Uterus (tissue), 4 donors: ENCODE measurements at regions of chr5 and their contacts with region 1.

Region 1: DNA sequence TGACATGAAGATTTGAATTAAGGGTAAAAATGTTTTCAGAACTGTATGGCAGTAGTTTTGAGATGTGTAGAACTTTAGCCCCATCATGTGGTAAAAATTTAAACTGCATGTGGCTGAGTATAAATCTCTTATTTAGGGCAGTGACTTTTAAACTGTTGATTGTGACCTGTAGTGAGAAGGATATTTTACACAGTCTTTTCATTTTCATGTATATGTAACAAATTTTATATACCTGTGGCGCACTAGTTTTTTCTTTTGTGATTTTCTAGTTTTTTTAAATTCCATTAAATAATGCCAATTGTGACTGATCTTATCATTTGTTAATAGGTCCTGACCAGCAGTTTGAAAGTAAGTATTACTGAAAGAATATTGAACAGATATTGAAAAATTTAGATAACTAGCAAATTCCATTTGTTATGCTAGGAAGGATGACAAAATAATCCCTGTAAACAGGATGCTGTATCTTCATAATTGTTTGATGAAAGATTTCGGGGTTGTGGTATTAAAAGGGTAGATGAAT is 47.2 kb downstream of the GPBP1 start:
- DNase-seq: no peak
- H3K4me3 ChIP-seq: no peak overlapping the region
- H3K27ac ChIP-seq: no peak overlapping the region
- H3K4me1 ChIP-seq: no peaks in the 10 kb centered on the region
- H3K27me3 ChIP-seq: no peaks in the 10 kb centered on the region
- CTCF ChIP-seq: peak; percentile 85 to 93 (median 92)
- POLR2A ChIP-seq: no peak

Region 2: GRCh38 chr5:56900858-56901578 is 320.1 kb before region 1 on chr5:
- intact Hi-C with region 1: loop called (anchors 5 kb)
- DNase-seq: peak in 1 of 2 donors; percentile 24
- H3K4me3 ChIP-seq: no peak overlapping the region
- H3K27ac ChIP-seq: no peak overlapping the region
- H3K4me1 ChIP-seq: no peaks in the 10 kb centered on the region
- H3K27me3 ChIP-seq: no peaks in the 10 kb centered on the region
- CTCF ChIP-seq: peak; percentile 51 to 71 (median 61)
- POLR2A ChIP-seq: no peak